ENCODE measurements at regions of chr4 and their contacts with region 1.

Region 1: DNA sequence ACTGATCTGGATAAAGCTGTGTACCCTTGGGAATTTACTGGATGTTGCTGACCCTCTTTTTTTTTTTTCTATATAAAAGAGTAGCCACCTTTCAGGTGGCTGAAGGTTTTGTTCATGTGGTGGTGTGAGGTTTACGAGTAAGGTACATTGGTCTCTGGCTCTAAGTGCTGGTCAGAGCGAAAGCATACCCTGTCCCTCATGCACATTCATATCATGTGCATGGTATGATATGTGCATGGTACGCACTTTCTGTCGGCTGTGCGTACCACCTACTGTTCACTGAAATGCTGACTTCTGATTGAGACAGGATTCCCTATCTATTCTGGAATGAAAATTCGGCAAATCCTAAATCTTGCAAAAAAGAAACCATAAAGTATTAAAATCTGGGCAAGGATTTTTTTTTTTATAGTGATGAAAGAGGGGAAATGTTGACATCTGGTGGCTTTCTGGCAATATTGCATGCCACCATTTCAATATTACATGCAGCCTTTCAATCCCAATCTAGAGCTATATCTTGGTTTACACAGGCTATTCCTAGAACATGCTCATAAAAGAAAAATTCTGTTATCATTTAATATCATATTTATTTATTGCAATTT is 32.8 kb downstream of the FAM149A start:
- DNase-seq: no peak
- ATAC-seq: peak; percentile 53

Region 2: DNA sequence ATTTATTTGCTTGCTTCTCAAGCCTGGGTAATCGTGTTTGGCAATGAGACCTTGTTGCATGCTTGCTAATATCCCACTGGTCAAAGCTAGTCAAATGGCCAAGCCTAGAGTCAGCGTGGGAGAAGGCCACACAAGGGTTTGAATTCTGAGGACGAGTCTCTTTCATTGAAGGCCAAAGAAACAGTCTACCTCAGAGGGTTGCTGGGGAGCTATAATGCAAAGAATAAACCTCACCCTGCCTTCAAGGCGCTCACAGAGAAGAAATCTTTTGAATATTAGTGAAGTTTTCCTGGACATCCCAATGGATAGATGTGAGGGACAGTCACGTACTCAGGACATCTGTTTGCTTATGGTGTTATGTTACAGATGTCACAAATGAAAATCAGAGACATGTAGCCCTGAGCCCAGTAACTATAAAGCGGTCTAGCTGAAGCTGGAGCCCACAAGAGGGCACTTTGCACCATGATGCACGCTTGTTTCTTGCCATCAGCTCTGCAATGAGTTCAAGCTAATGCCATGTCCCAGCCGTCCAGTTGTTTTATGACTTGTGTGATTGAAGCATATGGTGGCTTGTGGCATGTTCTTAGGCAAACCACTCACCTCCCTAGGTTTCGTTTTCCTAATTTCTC is 69.4 kb before region 1 on chr4:
- intact Hi-C with region 1: loop called (anchors 5 kb)
- DNase-seq: peak; percentile 57
- ATAC-seq: peak; percentile 93

Region 3: DNA sequence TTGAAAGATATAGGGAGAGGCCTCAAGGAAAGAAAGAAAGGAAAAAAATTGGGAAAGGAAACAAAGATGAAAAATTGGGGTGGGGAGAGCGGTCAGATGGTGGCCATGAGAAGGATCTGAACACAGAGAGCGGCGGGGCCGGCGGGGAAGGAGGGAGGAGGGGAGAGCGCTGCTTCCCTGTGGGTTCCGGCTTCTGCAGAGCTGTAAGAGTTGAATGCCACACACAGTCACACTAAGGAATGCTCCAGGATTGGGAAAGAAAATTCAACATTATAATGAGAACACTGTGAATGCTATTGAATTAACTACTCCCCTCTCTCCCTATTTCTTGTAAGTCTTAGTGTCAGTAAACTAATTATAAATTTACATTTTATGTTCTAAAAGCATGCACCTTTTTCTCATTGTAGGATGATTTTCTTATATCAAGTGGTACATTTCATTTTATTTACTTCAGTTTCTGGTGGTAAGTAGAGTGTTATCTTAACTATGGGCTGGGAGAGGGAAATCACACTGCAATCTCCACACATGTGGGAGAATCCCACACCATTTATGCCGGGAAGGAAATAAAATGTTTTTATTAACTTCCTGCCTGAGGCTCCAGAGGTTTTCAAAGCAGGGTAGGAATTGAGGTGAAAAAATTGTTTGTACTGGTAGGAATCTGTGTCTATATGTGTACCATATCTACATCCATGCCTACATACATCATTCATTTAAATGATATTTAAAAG is 129.6 kb after region 1 on chr4:
- intact Hi-C with region 1: no loop called
- DNase-seq: no peak
- ATAC-seq: no peak